Activated CD4-positive, alpha-beta T cell treated with anti-CD3 and anti-CD28 coated beads for 36 hours (primary cell): ENCODE measurements at regions of chr12 and their contacts with region 1.

Region 1: DNA sequence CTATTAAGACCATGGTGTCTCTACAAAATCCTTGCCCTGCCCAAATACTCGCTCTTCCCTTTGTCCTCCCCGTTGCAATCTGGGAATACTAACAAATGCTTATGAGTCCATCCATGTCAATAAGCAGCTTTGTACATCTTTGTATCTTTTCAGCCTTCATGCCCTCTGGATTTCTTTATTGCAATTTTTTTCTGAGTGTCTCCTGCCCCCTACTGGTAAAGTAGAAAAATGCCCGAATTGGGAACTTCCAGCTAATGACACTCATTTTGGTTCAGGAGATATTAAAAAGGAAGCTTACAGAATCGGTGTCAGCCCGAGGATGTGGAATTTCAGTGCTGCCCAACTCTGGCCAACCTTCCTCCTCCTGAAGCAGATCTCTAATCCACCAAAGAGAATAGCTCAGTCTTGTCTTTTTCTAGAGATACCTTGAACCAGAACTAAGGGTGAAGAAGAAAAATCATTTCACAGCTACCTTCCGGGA is 46.0 kb downstream of the SH2B3 start:
- DNase-seq: no peak
- ATAC-seq: peak; percentile 40
- H3K4me3 Mint-ChIP-seq: no peak overlapping the region
- H3K27ac Mint-ChIP-seq: no peak overlapping the region
- H3K4me1 Mint-ChIP-seq: peaks cover 16% of the 10 kb centered on the region
- H3K27me3 Mint-ChIP-seq: no peaks in the 10 kb centered on the region

Region 2: GRCh38 chr12:111368788-111369495 is 82.7 kb before region 1 on chr12 and contains the start of gene PHETA1:
- CTCF ChIA-PET with region 1: interaction called, 15 read pairs
- POLR2A ChIA-PET with region 1: no interaction called
- intact Hi-C with region 1: no loop called
- DNase-seq: peak; percentile 88
- ATAC-seq: peak; percentile 89
- H3K4me3 Mint-ChIP-seq: peak within 1 kb of the TSS; percentile 70
- H3K27ac Mint-ChIP-seq: no peak within 1 kb of the TSS
- H3K4me1 Mint-ChIP-seq: peaks cover 15% of the 10 kb centered on the region
- H3K27me3 Mint-ChIP-seq: peaks cover 3% of the 10 kb centered on the region
- total RNA-seq, gene PHETA1: 1.3 to 1.5 TPM

Region 3: DNA sequence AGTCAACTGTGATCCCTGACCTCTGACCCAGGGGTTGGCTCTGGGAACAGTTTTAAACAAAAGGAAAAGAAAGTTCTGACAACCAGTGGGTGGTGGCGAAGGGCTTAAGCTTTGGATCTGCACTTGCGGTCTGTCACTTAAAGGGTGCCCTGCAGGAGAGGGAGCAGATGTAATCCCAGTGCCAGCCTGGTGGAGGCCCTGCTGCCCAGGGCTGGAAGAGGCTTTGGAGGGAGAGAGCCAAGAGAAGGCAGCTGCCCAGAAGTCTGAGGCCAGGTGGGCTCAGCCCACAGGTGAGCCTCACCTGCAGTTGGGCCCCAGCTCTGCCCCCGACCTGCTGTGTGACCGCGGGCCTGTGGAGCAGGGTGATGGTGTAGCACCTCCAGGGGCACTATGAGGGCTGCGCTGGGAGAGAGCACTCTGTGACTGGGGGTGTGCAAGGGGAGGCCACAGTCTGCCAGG is 26.9 kb before region 1 on chr12:
- CTCF ChIA-PET with region 1: interaction called, 41 read pairs
- POLR2A ChIA-PET with region 1: interaction called, 4 read pairs
- intact Hi-C with region 1: no loop called
- DNase-seq: peak; percentile 42
- ATAC-seq: peak; percentile 24
- H3K4me3 Mint-ChIP-seq: no peak overlapping the region
- H3K27ac Mint-ChIP-seq: peak overlapping the region; percentile 44
- H3K4me1 Mint-ChIP-seq: peaks cover 61% of the 10 kb centered on the region
- H3K27me3 Mint-ChIP-seq: no peaks in the 10 kb centered on the region

Region 4: DNA sequence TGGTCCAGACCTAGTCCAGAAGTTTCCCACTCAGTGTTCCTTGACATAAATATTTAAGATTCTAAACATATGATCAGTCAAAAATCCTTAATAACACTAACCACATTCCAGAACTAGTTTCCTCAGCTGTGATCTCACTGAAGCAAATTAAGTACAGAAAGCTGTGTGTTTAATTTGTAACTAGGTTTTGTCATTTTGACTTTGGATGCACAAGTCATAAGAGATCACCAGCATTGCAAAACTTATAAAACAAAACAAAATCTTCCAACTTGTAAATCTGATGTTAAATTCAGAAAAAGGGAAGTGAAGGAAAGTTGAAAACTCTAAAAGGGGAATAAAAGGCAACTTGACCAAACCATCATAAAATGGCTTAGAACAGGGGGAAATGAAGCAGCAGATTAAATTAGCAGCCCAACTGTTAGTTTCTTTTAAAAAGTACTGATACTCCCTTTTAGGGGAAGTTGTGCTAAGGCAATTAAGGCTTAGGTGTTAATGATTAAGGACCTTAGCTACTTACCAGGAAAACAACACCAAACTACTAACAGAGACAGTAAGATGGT is 10.6 kb after region 1 on chr12:
- CTCF ChIA-PET with region 1: interaction called, 45 read pairs
- POLR2A ChIA-PET with region 1: no interaction called
- intact Hi-C with region 1: no loop called
- DNase-seq: no peak
- ATAC-seq: no peak
- H3K4me3 Mint-ChIP-seq: no peak overlapping the region
- H3K27ac Mint-ChIP-seq: peak overlapping the region; percentile 72
- H3K4me1 Mint-ChIP-seq: no peaks in the 10 kb centered on the region
- H3K27me3 Mint-ChIP-seq: no peaks in the 10 kb centered on the region